Spleen (tissue), 13 donors: ENCODE measurements at regions of chr3 and their contacts with region 1.

Region 1: GRCh38 chr3:46705022-46705530 is 3.9 kb downstream of the TMIE start:
- DNase-seq: peak; percentile 88
- H3K4me3 ChIP-seq: no peak overlapping the region
- H3K27ac ChIP-seq: no peak overlapping the region
- H3K4me1 ChIP-seq: peaks cover 8 to 33% (median 20%) of the 10 kb centered on the region in 6 donors
- H3K27me3 ChIP-seq: peaks cover 0 to 27% (median 12%) of the 10 kb centered on the region in 7 donors
- CTCF ChIP-seq: peak; percentile 92 to 98 (median 96)
- POLR2A ChIP-seq: no peak

Region 2: DNA sequence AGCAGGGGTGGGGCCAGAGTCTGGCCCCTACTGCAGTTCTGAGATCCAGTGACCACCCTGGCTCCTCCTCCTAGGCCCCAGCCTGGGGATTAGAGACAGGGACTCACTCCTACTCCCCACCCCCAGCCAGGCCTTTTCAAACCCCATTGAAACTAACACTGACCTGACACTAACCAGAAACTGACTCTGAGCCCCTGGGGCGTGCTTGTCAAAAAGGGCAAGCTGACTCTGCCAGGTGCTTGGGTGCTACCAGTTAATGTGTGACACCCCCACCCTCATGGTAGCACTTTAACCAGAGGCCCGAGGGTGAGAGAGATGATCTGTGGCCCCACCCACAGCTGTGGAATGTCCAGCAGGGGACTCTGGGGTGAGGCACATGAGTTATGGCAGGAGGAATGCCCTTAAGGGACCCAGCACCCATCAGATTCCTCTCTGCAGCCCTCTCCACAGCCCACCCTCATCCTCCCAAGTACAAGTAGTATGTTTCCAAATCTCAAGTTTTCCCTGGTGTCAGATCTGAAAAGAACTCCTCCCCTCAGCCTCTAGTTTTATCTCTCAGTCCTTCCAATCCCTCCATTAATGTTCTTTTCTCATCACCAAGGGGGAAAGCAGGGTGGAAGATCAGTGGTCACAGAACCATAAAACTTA is 173.8 kb after region 1 on chr3:
- intact Hi-C with region 1: no loop called
- DNase-seq: no peak
- H3K4me3 ChIP-seq: no peak overlapping the region
- H3K27ac ChIP-seq: peak overlapping the region in 2 of 8 donors; percentile 11 to 18
- H3K4me1 ChIP-seq: peaks cover 6 to 65% (median 44%) of the 10 kb centered on the region in 6 donors
- H3K27me3 ChIP-seq: peaks cover 0 to 43% (median 35%) of the 10 kb centered on the region in 7 donors
- CTCF ChIP-seq: no peak
- POLR2A ChIP-seq: no peak

Region 3: DNA sequence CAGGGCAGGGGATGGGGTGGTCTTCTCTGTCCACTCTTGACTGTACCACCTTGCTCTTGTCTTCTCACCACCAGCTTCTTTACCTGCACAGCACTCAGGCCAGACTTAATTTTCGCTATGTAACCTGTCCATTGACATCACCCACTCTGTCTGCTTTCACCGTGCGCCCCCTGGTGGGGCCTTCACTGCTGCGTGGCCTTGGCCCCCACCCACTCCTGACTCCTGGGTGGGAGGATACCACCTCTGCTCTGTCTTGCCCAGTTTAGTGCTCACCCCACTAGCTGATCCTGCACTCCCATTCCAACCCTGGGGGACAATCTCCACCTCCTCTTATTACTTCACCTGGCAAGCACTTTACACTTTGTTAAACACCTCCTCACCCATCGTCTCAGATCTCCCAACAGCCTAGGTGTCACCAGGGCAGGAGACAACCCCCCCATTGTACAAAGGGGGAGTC is 190.2 kb after region 1 on chr3:
- intact Hi-C with region 1: loop called (anchors 5 kb)
- DNase-seq: peak; percentile 90
- H3K4me3 ChIP-seq: no peak overlapping the region
- H3K27ac ChIP-seq: no peak overlapping the region
- H3K4me1 ChIP-seq: peaks cover 4 to 67% (median 29%) of the 10 kb centered on the region in 6 donors
- H3K27me3 ChIP-seq: peaks cover 0 to 76% (median 20%) of the 10 kb centered on the region in 7 donors
- CTCF ChIP-seq: peak; percentile 74 to 91 (median 85)
- POLR2A ChIP-seq: no peak